ENCODE measurements at regions of chr9 and their contacts with region 1.

Region 1: DNA sequence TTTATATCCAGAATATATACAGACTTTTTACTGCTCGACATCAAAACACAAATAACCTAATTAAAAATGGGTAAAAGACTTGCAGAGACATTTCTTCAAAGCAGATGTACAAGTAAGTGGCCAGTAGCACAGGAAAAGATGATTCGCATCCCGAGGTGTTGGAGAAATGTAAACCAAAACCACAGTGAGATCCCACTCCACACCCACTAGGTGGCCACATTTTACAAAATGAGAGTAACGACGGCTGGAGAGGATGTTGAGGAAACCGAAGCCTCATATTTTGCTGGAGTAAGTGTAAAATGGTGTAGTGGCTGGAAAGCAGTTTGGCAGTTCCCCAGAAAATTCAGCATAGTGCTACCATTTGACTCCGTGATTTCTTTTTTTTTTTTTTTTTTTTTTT is 21.2 kb upstream of the GBGT1 start:
- DNase-seq: peak in 2 of 5 donors; percentile 43 to 49
- ATAC-seq: peak in 3 of 4 donors; percentile 65 to 88 (median 81)
- H3K4me3 ChIP-seq: no peak overlapping the region
- H3K27ac ChIP-seq: no peak overlapping the region
- H3K4me1 ChIP-seq: peaks cover 0 to 12% (median 0%) of the 10 kb centered on the region in 12 donors
- H3K27me3 ChIP-seq: peaks cover 0 to 12% (median 0%) of the 10 kb centered on the region in 9 donors
- CTCF ChIP-seq: peak; percentile 41 to 79 (median 61)
- POLR2A ChIP-seq: no peak

Region 2: DNA sequence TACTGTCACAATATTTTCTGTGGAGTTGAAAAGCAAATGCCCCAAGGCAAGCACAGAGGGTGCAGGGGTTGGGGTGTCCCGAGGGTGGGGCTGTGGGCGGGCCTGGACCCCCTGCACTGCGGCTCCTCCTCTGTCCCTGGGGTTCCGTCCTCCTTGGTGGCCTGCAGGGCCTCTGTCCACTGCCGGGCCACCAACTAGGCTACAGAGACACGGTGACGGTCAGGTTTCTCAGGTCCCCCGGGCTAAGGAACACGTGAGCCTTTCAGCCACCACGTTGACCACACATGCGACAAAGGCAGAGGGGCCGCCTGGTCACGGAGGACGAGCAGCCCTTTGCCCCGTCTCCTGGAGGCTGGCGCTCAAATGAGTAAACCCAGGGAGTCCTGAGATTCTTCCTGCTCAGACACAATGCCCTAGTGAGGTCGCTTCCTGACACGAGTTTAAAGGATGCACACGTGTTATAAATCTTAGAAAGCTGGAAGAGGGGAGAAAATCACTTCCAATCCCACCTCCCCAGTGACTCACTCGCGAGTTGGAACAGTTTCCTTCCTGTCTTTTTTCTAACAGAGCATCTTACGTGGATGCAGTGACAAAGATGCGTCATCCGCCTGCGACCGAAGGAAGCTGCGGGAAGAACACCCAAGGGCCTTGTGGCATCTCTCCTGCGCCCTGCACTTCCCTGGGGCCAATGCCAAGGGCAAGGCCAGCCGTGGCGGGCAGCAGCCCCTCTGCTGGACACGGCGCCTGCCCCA is 48.9 kb after region 1 on chr9:
- intact Hi-C with region 1: loop called in 4 of 10 experiments (anchors 5 kb)
- DNase-seq: peak in 2 of 5 donors; percentile 50 to 56
- ATAC-seq: peak in 1 of 4 donors; percentile 49
- H3K4me3 ChIP-seq: peak overlapping the region in 2 of 12 donors; percentile 7 to 12
- H3K27ac ChIP-seq: peak overlapping the region; percentile 24 to 95 (median 67)
- H3K4me1 ChIP-seq: peaks cover 0 to 21% (median 14%) of the 10 kb centered on the region in 12 donors
- H3K27me3 ChIP-seq: no peaks in the 10 kb centered on the region
- CTCF ChIP-seq: no peak
- POLR2A ChIP-seq: no peak

Region 3: DNA sequence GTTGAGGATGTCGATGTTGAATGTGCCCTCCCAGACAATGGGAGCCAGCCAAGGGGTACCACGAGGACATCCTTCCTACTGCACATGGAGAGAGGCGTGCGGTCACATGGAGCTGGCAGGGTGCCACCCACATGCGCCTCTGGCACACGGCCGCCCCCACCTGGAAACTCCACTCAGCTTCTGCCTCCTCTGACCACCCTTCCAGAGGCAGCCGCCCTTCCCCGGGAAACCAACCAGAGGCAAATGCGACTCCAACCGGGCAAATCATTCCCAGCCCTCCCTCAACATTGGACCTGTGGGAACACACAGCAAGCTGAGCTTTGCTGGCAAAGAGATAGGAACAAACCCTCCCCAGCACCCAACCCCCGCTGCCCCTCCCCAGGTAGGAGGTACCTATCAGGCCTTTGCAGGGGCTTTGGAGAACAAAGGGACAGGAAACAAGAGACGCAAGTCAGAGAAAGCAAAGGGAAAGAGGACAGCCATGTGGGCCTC is 72.5 kb after region 1 on chr9:
- intact Hi-C with region 1: loop called in 1 of 10 experiments (anchors 5 kb)
- DNase-seq: peak in 4 of 5 donors; percentile 66 to 70 (median 68)
- ATAC-seq: peak in 3 of 4 donors; percentile 39 to 73 (median 71)
- H3K4me3 ChIP-seq: no peak overlapping the region
- H3K27ac ChIP-seq: peak overlapping the region in 10 of 12 donors; percentile 16 to 81 (median 56)
- H3K4me1 ChIP-seq: peaks cover 0 to 37% (median 25%) of the 10 kb centered on the region in 12 donors
- H3K27me3 ChIP-seq: no peaks in the 10 kb centered on the region
- CTCF ChIP-seq: peak in 6 of 12 donors; percentile 13 to 38 (median 24)
- POLR2A ChIP-seq: no peak

Region 4: DNA sequence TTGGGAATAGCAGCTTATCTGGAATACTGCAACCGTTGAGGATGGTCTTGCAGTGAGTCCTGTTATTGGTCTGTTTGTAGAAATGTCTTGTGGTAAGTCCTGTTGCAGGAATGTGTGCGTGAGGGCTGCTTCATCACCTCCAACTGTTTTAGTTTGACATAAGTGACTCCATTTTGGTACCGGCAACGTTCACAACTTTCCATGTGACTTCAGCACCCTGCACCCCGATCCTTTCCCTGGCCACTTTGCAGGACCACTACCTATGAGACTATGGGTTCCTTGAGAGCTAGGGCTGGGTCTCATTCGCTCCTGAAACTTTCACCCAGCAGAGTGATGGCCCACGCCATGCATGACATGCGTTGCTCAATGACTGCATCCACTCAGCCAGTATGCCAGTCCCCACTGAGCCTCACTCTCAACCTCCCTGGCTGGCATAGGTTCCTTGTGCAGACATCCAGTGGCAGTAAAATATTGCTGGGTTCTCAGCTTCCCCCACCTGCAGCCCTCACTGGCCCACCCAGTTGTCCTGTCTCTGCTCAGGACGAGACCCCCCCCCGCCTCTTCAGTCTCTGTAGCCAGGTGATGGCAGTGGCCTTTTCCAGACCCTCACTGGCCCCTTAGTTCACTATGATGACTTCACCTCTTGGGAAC is 143.0 kb after region 1 on chr9:
- intact Hi-C with region 1: loop called (anchors 1 to 5 kb)
- DNase-seq: peak in 1 of 5 donors; percentile 4
- ATAC-seq: peak in 1 of 4 donors; percentile 28
- H3K4me3 ChIP-seq: no peak overlapping the region
- H3K27ac ChIP-seq: no peak overlapping the region
- H3K4me1 ChIP-seq: no peaks in the 10 kb centered on the region
- H3K27me3 ChIP-seq: no peaks in the 10 kb centered on the region
- CTCF ChIP-seq: no peak
- POLR2A ChIP-seq: no peak

Region 5: GRCh38 chr9:133406480-133407307 is 221.7 kb after region 1 on chr9:
- intact Hi-C with region 1: loop called in 1 of 10 experiments (anchors 10 kb)
- DNase-seq: peak; percentile 68 to 86 (median 77)
- ATAC-seq: peak; percentile 81 to 86 (median 82)
- H3K4me3 ChIP-seq: no peak overlapping the region
- H3K27ac ChIP-seq: no peak overlapping the region
- H3K4me1 ChIP-seq: peaks cover 0 to 17% (median 0%) of the 10 kb centered on the region in 12 donors
- H3K27me3 ChIP-seq: no peaks in the 10 kb centered on the region
- CTCF ChIP-seq: peak; percentile 83 to 94 (median 89)
- POLR2A ChIP-seq: no peak

Region 6: GRCh38 chr9:133726401-133727276 is 541.7 kb after region 1 on chr9:
- intact Hi-C with region 1: loop called in 3 of 10 experiments (anchors 5 to 10 kb)
- DNase-seq: peak; percentile 49 to 76 (median 56)
- ATAC-seq: peak; percentile 44 to 86 (median 76)
- H3K4me3 ChIP-seq: no peak overlapping the region
- H3K27ac ChIP-seq: no peak overlapping the region
- H3K4me1 ChIP-seq: no peaks in the 10 kb centered on the region
- H3K27me3 ChIP-seq: peaks cover 0 to 20% (median 4%) of the 10 kb centered on the region in 9 donors
- CTCF ChIP-seq: peak; percentile 49 to 74 (median 64)
- POLR2A ChIP-seq: no peak